ENCODE measurements at regions of chr4 and their contacts with region 1.

Region 1: GRCh38 chr4:143329985-143330384 is 6.7 kb upstream of the GAB1 start:
- DNase-seq: no peak
- ATAC-seq: no peak
- H3K4me3 ChIP-seq: no peak overlapping the region
- H3K27ac ChIP-seq: no peak overlapping the region
- H3K4me1 ChIP-seq: peaks cover 0 to 7% (median 0%) of the 10 kb centered on the region in 12 donors
- H3K27me3 ChIP-seq: no peaks in the 10 kb centered on the region
- CTCF ChIP-seq: no peak
- POLR2A ChIP-seq: no peak

Region 2: DNA sequence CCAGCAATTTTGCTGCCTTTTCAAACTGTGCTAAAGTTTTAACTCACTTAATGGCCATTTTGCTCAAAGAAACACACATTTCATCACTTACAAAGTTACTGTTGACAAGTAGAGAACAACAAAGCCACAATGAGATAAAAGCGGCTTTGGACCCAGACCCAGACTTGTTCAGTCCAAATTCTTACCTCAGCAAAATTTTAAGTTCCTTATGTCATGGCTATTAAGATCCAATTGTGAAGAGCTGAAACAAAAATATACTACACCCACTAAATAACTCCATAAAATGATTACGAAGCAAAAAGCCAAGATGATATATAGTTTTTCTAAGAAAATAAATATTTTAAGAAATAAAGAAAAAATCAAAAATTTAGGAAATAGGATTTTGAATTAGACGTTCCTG is 346.9 kb before region 1 on chr4:
- intact Hi-C with region 1: no loop called
- DNase-seq: no peak
- ATAC-seq: peak in 1 of 4 donors; percentile 26
- H3K4me3 ChIP-seq: no peak overlapping the region
- H3K27ac ChIP-seq: no peak overlapping the region
- H3K4me1 ChIP-seq: peaks cover 0 to 7% (median 0%) of the 10 kb centered on the region in 12 donors
- H3K27me3 ChIP-seq: no peaks in the 10 kb centered on the region
- CTCF ChIP-seq: no peak
- POLR2A ChIP-seq: no peak

Region 3: GRCh38 chr4:143294310-143294709 is 35.7 kb before region 1 on chr4:
- intact Hi-C with region 1: loop called in 7 of 10 experiments (anchors 5 to 10 kb)
- DNase-seq: peak; percentile 75 to 91 (median 86)
- ATAC-seq: peak; percentile 63 to 93 (median 92)
- H3K4me3 ChIP-seq: no peak overlapping the region
- H3K27ac ChIP-seq: peak overlapping the region in 8 of 12 donors; percentile 4 to 54 (median 26)
- H3K4me1 ChIP-seq: peaks cover 0 to 28% (median 12%) of the 10 kb centered on the region in 12 donors
- H3K27me3 ChIP-seq: no peaks in the 10 kb centered on the region
- CTCF ChIP-seq: no peak
- POLR2A ChIP-seq: no peak

Measured in heart left ventricle (tissue), 16 donors.